OCI-LY7 (cell line): ENCODE measurements at regions of chr17 and their contacts with region 1.

Region 1: DNA sequence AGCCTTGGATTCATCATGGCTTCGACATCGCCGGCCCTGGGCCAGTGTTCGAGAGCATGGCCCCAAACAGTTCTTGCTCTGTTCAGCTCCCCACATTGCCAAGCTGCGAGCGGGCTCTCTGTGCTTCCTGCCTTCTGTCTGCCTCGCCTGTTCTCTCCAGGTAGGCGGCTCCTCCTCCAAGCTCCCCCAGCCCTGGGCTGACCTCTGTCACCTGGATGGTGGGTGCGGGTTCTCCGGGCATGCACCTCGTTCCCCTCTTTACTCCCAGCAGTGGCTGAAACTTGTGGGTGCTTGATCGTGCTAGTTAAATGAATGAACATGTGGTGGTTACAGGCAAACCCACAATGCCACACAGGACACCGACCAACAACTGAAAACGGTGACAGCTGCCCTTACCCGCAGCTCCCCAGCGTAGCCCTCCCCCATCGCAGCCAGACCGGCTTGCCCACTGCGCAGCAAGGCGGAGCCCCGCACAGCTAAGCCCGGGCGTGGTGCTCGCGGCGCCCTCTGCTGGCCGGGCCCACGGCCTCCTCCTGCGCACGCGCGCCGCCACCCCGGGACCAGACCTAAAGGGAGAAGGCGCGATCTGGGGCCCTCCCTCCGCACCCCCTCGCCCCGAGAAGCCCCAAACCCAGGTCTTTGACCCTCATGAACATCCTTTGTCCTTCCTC is 23.0 kb upstream of the EIF1 start:
- DNase-seq: peak; percentile 90
- H3K4me3 ChIP-seq: peak overlapping the region; percentile 62
- H3K27ac ChIP-seq: peak overlapping the region; percentile 84
- H3K4me1 ChIP-seq: peaks cover 31% of the 10 kb centered on the region
- CTCF ChIP-seq: peak; percentile 95

Region 2: GRCh38 chr17:40803617-40804082 is 862.1 kb before region 1 on chr17:
- CTCF ChIA-PET with region 1: no interaction called
- POLR2A ChIA-PET with region 1: no interaction called
- intact Hi-C with region 1: loop called (anchors 5 kb)
- DNase-seq: peak; percentile 62
- H3K4me3 ChIP-seq: no peak overlapping the region
- H3K27ac ChIP-seq: no peak overlapping the region
- H3K4me1 ChIP-seq: no peaks in the 10 kb centered on the region
- CTCF ChIP-seq: peak; percentile 93

Region 3: GRCh38 chr17:41322094-41322902 is 343.4 kb before region 1 on chr17:
- CTCF ChIA-PET with region 1: no interaction called
- POLR2A ChIA-PET with region 1: no interaction called
- intact Hi-C with region 1: loop called (anchors 10 kb)
- DNase-seq: peak; percentile 46
- H3K4me3 ChIP-seq: no peak overlapping the region
- H3K27ac ChIP-seq: no peak overlapping the region
- H3K4me1 ChIP-seq: no peaks in the 10 kb centered on the region
- CTCF ChIP-seq: peak; percentile 80

Region 4: GRCh38 chr17:41415825-41416335 is 249.8 kb before region 1 on chr17:
- CTCF ChIA-PET with region 1: no interaction called
- POLR2A ChIA-PET with region 1: no interaction called
- intact Hi-C with region 1: no loop called
- DNase-seq: no peak
- H3K4me3 ChIP-seq: no peak overlapping the region
- H3K27ac ChIP-seq: no peak overlapping the region
- H3K4me1 ChIP-seq: no peaks in the 10 kb centered on the region
- CTCF ChIP-seq: no peak

Region 5: DNA sequence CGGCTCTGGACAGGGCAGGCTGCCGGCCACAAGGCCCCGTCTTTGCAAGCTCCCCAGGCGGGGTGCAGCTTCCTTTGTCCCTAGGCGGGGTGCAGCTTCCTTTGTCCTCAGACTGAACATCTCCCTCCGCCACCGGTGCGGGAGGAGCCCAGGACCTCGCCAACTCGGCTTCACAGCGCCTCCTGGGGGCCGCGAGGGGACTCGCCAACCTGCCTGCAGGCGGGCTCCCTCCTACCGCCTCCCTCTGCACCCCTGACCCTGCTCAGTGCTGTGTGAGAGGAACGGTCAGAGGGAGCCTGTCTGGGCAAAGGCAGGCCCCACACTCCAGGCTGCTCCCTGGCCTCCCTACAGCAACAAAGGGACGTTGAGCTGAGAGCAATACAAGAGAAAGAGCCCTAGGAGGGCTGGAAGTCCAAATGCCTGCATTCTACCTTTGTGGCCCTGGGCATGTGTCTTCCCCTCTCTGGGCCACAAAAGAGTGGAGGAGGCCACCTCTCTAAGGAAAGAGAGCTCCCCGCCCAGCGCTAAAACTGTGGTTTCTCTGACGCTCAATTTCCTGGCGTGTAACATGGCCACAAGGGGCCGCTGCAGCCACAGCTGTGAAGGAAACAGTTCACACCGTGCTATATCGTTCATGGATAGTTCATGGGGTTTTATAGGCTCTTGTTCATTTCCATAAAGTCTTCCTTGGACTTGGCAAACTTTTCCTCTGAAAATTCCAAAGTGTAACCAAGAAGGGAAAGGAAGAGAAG is 116.7 kb before region 1 on chr17:
- CTCF ChIA-PET with region 1: no interaction called
- POLR2A ChIA-PET with region 1: interaction called, 4 read pairs
- intact Hi-C with region 1: loop called (anchors 1 kb)
- DNase-seq: peak; percentile 75
- H3K4me3 ChIP-seq: no peak overlapping the region
- H3K27ac ChIP-seq: no peak overlapping the region
- H3K4me1 ChIP-seq: no peaks in the 10 kb centered on the region
- CTCF ChIP-seq: peak; percentile 96

Region 6: DNA sequence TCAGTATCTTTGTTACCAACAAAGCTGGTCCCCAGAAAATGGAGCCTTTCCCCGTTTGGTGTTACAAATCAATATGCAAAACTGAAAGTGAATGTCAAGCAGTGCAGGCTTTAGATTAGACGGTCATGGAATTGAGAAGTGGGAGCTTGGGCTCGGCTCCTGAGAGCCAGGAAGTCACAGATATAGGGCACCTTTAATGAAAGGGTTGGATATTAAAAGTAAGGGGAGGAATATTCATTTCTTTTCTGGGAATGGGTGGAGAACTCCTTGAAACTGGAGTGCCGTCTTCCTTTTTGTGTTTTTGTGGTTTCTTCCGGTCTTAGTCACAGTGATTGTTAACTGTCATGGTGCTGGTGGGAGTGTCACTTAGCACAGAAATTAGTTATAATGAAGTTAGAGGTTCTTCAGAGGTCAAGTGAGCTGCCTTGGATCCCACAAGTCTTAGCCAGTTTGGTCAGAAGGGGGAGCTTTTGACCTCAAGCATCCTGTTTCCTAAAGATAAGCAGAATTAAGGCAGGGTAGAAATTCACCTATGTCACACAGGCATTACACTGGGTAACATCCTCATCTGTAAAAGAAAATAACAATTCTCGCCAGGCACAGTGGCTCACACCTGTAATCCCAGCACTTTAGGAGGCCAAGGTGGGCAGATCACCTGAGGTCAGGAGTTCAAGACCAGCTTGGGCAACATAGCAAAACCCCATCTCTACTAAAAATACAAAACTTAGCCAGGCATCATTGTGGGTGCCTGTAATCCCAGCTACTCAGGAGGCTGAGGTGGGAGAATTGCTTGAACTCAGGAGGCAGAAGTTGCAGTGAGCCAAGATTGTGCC is 13.4 kb after region 1 on chr17:
- CTCF ChIA-PET with region 1: interaction called, 4 read pairs
- POLR2A ChIA-PET with region 1: interaction called, 10 read pairs
- intact Hi-C with region 1: no loop called
- DNase-seq: peak; percentile 49
- H3K4me3 ChIP-seq: peak overlapping the region; percentile 32
- H3K27ac ChIP-seq: no peak overlapping the region
- H3K4me1 ChIP-seq: peaks cover 15% of the 10 kb centered on the region
- CTCF ChIP-seq: peak; percentile 52